Left colon (tissue), 2 donors: ENCODE measurements at regions of chr1 and their contacts with region 1.

Region 1: GRCh38 chr1:32063261-32063681 is 9.5 kb upstream of the TMEM39B start:
- DNase-seq: no peak
- ATAC-seq: peak; percentile 55

Region 2: DNA sequence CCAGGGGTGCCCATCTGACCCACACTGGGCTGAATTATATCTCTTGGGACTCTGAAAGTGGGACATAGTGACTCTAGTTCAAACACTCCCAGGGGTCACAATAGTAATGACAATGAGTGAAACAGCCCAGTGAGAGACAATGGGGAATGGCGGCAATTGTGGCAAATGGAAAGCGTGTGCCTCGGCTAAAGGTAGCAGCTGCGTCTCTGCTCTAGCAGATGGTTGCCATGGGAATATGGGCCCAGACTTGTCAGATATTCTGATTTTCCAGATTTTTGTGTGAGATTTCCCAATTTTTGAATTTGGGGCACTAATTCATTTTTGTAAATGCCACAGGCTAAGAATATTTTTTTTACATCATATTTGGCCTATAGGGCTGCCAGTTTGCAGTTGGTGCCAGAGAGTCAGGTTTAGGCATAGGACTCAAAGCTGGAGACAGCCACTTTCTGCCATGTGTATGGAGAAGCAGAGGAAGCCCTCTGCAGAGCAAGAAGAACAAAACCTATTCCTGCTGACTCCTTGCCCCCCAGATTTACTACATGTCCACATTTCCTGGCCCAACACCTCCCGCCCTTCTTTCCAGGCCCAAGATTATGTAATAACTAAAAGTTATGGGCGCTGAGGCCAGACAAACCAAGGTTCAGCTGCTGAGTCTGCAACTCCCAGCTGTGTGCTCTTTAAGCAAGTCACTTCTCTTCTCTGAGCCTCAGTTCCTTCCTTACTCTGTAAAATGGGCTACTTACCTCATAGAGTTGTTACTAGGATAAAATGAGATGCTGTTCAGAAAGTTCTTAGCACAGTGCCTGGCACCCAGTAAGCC is 103.5 kb before region 1 on chr1:
- intact Hi-C with region 1: loop called in 1 of 2 experiments (anchors 10 kb)
- DNase-seq: no peak
- ATAC-seq: no peak